IMR-90 (cell line): ENCODE measurements at regions of chr20 and their contacts with region 1.

Region 1: DNA sequence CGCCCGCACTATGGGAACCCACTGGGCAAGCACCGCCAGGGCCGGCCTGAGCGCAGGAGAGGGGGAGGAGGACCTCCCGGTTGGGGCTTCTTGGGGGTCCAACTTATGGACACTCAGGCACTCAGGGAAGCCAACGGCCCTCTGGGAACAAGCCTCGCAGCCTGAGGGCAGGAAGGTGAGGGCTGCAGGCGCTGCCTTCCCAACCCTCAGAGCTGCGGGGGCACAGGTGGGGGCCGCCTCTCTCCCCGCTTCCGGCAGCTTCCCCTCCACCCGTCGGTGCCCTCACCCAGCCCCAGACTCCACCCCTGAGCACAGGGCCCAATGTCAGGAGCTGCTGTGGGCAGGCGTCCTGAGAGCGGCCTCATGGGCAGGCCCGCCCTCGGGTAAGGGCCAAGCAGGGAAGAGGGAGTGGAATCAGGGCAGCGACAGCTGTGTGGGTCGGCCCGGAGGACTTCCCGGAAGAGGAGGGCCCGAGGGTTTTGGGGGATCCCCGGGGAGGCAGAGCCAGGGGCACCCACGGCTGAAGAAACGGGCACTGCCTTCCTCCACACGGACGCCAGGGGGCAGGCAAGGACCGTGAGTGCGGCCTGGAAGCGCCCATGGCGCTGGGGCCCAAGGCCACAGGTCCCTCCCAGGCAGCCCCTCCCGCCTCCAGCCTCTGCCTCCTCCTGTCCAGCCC is 488 bp upstream of the PTK6 start:
- DNase-seq: peak; percentile 86
- ATAC-seq: peak; percentile 95
- H3K4me3 ChIP-seq: 0 out of 2 replicates have a peak overlapping the region, but pooled peaks have one; percentile 12
- H3K27ac ChIP-seq: no peak overlapping the region; the same call in 1 of the 2 replicates
- H3K4me1 ChIP-seq: peaks cover 3% of the 10 kb centered on the region; the same call in 1 of the 2 replicates
- H3K27me3 ChIP-seq: peaks cover 4% of the 10 kb centered on the region; the same call in 1 of the 2 replicates
- CTCF ChIP-seq: peak; percentile 98
- POLR2A ChIP-seq: peak; percentile 62
- RAD21 ChIP-seq: peak; percentile 99

Region 2: DNA sequence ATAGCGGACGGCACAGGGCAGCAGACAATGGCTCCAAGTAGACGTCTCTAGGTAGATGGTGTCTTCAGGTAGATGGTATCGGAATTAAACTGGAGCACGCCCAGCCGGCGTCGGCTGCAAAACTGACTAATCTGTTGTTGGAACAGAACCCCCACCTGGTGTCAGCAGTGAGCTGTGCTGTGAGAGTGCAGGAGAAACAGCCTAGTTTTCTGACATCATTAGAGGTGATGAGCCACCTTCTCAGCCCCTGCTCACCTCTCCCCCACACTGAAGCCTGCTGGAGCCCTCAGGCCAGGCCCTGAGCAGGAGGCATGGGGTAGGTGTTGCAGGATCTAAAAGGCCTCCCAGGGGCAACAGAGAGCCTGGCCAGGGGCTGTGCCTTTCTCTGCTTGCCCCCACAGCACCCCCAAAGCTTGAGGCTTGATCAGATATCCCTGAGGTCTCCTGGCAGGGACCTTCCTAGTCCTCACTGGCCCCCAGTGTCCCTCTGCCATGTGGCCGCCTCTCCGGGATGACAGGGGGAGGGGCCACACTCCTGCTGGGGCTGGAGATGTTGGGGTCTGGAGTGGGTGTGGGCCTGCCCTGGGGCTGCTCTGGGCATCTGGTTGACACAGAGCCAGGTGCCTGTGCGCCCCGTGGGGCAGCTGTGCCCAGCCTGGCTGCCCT is 43.3 kb after region 1 on chr20:
- CTCF ChIA-PET with region 1: no interaction called
- POLR2A ChIA-PET with region 1: no interaction called
- dilution Hi-C with region 1: no loop called
- in situ Hi-C with region 1: no loop called
- intact Hi-C with region 1: no loop called
- DNase-seq: peak; percentile 54
- ATAC-seq: peak; percentile 44
- H3K4me3 ChIP-seq: no peak overlapping the region
- H3K27ac ChIP-seq: no peak overlapping the region
- H3K4me1 ChIP-seq: no peaks in the 10 kb centered on the region
- H3K27me3 ChIP-seq: no peaks in the 10 kb centered on the region
- CTCF ChIP-seq: peak; percentile 46
- POLR2A ChIP-seq: no peak
- RAD21 ChIP-seq: peak; percentile 60

Region 3: GRCh38 chr20:63657937-63658748 is 120.5 kb after region 1 on chr20 and contains the start of gene RTEL1:
- CTCF ChIA-PET with region 1: no interaction called
- POLR2A ChIA-PET with region 1: no interaction called
- dilution Hi-C with region 1: no loop called
- in situ Hi-C with region 1: no loop called
- intact Hi-C with region 1: loop called (anchors 10 kb)
- DNase-seq: peak; percentile 91
- ATAC-seq: peak; percentile 96
- H3K4me3 ChIP-seq: peak within 1 kb of the TSS; percentile 85
- H3K27ac ChIP-seq: peak within 1 kb of the TSS; percentile 96
- H3K4me1 ChIP-seq: peaks cover 13% of the 10 kb centered on the region
- H3K27me3 ChIP-seq: no peaks in the 10 kb centered on the region
- CTCF ChIP-seq: no peak
- POLR2A ChIP-seq: no peak
- RAD21 ChIP-seq: no peak
- total RNA-seq, gene RTEL1: 9.4 and 14.7 TPM in 2 replicates

Region 4: DNA sequence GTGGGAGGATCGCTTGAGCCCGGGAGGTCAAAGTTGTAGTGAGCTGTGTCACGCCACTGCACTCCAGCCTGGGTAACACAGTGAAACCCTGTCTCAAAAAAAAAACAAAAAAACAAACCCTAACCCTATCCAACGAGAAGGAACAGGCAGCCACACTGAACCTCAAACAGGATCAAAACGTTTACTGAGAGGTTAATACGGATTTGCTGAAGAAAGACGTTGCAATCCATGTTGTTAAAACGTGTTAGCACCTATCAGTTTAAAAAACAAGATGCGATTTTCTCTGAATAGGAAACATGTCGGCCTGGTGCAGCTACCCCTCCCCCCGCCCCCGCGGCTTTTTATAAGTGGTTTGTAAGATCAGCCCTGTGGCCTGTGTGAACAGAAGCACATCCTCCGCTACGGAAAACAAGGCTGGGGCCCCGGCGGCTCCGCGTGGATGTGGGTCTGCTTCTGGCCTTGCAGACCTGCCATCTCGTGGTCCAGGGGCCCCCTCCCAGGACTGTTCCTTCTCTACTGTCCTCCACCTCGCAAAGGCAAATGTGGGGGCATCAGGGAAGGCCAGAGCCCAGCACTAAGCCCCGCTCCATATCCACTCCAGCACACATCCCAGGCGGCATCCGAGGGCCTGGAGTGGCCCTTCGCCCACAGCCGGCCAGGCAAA is 213.3 kb after region 1 on chr20:
- CTCF ChIA-PET with region 1: no interaction called
- POLR2A ChIA-PET with region 1: no interaction called
- dilution Hi-C with region 1: no loop called
- in situ Hi-C with region 1: no loop called
- intact Hi-C with region 1: no loop called
- DNase-seq: no peak
- ATAC-seq: no peak
- H3K4me3 ChIP-seq: no peak overlapping the region
- H3K27ac ChIP-seq: no peak overlapping the region
- H3K4me1 ChIP-seq: no peaks in the 10 kb centered on the region
- H3K27me3 ChIP-seq: no peaks in the 10 kb centered on the region
- CTCF ChIP-seq: no peak
- POLR2A ChIP-seq: no peak
- RAD21 ChIP-seq: no peak

Region 5: DNA sequence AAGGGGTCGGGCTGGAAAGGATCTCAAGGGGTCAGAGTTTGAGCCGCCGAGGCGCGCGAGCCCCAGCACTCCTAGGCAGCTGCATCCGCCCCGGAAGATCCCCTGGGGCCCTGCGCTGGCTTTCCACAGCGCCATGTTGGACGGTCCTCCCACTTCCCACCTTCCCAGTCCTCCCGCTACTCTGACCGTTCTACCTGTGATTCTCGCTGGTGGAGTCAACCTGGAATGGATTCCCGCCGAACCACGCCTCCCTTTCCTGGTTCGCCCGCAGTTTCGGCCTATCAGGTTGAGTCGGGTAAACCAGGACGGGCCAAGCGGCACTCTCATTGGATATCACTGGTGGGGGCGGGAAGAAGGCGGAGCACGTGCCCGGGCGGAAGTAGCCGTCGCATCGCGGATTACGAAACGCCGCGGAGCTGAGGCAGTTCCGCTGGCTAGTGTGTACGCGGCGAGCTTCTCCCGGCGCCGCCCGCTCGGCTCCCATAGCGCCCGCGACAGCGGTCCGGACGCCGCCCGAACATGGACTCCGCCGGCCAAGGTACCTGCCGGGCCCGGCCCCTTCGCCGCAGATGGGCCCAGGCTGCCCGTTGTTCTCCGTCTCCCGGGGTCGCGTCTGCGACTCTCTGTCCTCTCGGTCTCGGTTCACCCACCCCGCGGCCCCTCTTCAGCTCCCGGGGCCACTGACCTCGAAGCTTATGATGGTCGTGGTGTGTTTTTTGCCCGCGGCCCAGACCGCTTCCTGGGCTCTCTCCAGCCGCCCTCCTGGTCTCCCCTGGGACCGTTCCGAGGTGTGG is 327.4 kb after region 1 on chr20 and contains the start of gene TPD52L2:
- CTCF ChIA-PET with region 1: interaction called, 10 read pairs
- POLR2A ChIA-PET with region 1: no interaction called
- dilution Hi-C with region 1: no loop called
- in situ Hi-C with region 1: loop called (anchors 10 kb)
- intact Hi-C with region 1: no loop called
- DNase-seq: peak; percentile 97
- ATAC-seq: peak; percentile 87
- H3K4me3 ChIP-seq: peak within 1 kb of the TSS; percentile 69
- H3K27ac ChIP-seq: peak within 1 kb of the TSS; percentile 94
- H3K4me1 ChIP-seq: peaks cover 6% of the 10 kb centered on the region
- H3K27me3 ChIP-seq: no peaks in the 10 kb centered on the region
- CTCF ChIP-seq: no peak
- POLR2A ChIP-seq: peak; percentile 98
- RAD21 ChIP-seq: no peak
- total RNA-seq, gene TPD52L2: 113 and 119 TPM in 2 replicates

Region 6: GRCh38 chr20:63973636-63974402 is 436.2 kb after region 1 on chr20:
- CTCF ChIA-PET with region 1: interaction called, 5 read pairs
- POLR2A ChIA-PET with region 1: interaction called, 3 read pairs
- dilution Hi-C with region 1: no loop called
- in situ Hi-C with region 1: loop called (anchors 10 kb)
- intact Hi-C with region 1: no loop called
- DNase-seq: peak; percentile 79
- ATAC-seq: peak; percentile 76
- H3K4me3 ChIP-seq: peak overlapping the region; percentile 45
- H3K27ac ChIP-seq: no peak overlapping the region; the same call in 1 of the 2 replicates
- H3K4me1 ChIP-seq: peaks cover 27% of the 10 kb centered on the region
- H3K27me3 ChIP-seq: no peaks in the 10 kb centered on the region
- CTCF ChIP-seq: peak; percentile 98
- POLR2A ChIP-seq: no peak
- RAD21 ChIP-seq: peak; percentile 96

Region 7: DNA sequence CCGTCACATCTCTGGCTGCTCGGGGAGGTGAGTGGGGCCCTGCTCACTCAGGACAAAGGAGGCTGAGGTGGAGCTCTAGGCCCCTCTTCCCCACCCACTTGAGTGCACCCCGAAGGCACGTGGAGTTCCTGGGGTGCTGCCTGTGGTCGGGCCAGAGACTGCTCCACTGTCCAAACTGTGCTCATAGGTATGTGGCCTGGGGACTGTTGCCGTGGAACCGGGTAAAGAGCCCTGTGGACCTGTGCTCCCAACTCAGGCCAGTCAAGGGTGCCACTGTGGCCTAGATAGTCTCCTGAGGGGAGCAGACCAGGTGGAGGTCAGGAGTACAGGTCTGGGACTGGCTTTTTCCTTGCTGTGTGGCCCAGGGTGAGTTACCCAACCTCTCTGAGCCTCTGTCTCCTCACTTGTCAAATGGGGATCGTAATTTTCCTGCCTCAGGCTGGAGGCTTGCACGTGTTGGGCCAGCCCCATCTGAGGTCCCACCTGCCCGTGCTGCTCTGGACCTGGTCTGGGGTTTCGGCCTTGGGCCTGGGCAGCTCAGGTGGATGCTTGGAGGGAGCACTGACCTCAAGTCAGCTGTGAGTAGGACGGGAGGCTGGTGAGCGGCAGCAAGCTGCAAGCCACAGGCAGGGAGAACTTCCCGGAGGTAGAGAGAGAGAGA is 582.1 kb after region 1 on chr20:
- CTCF ChIA-PET with region 1: interaction called, 3 read pairs
- POLR2A ChIA-PET with region 1: no interaction called
- dilution Hi-C with region 1: no loop called
- in situ Hi-C with region 1: no loop called
- intact Hi-C with region 1: loop called (anchors 1 kb)
- DNase-seq: no peak
- ATAC-seq: no peak; the same call in 1 of the 2 replicates
- H3K4me3 ChIP-seq: no peak overlapping the region
- H3K27ac ChIP-seq: no peak overlapping the region
- H3K4me1 ChIP-seq: no peaks in the 10 kb centered on the region
- H3K27me3 ChIP-seq: peaks cover 30% of the 10 kb centered on the region
- CTCF ChIP-seq: no peak
- POLR2A ChIP-seq: no peak
- RAD21 ChIP-seq: no peak